Activated B cell treated with CpG ODN at 0.5 μM for 24 hours (primary cell): ENCODE measurements at regions of chr7 and their contacts with region 1.

Region 1: DNA sequence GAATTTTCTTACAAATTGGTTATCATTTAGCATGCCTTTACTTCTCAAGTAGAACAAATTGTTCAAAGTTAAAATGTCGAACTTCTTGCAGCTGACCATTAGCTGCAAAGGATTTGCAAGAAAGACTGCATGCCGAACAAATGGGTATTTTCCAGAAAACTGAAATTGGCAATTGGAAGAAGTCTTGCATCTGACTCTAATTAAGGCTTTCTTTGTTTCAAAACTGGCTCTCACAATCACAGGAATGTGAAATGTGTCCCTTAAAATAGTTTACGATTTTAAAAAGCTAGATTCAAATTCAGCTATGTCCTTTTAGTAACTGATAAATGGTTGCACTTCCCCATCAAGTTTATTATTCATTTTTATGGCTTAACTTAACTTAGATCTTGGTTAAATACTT is 207.9 kb downstream of the ARL4A start:
- DNase-seq: no peak
- ATAC-seq: no peak
- H3K4me3 Mint-ChIP-seq: no peak overlapping the region
- H3K27ac Mint-ChIP-seq: no peak overlapping the region
- H3K4me1 Mint-ChIP-seq: no peaks in the 10 kb centered on the region
- H3K27me3 Mint-ChIP-seq: no peaks in the 10 kb centered on the region
- CTCF ChIP-seq: no peak

Region 2: DNA sequence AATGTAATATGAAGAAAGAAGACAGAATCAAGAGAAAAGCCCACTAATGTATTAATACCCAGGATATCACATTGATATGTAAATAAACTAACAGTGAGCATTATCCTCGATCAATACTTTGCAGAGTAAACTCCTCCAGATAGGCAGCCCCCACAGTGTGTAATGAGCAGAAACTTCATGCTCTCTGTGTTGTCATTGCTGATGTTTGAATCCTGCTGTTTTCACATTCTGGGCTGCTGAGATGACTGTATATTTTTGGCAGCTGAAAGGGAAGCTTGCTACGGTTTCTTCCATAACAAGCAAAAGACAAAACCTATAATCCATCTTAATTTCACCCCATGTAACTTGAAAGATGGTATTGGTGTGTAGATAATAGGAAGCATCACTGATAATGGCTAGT is 1048.0 kb before region 1 on chr7:
- CTCF ChIA-PET with region 1: no interaction called
- POLR2A ChIA-PET with region 1: no interaction called
- intact Hi-C with region 1: loop called (anchors 5 kb)
- DNase-seq: no peak
- ATAC-seq: no peak
- H3K4me3 Mint-ChIP-seq: no peak overlapping the region
- H3K27ac Mint-ChIP-seq: no peak overlapping the region
- H3K4me1 Mint-ChIP-seq: no peaks in the 10 kb centered on the region
- H3K27me3 Mint-ChIP-seq: no peaks in the 10 kb centered on the region
- CTCF ChIP-seq: no peak